CD4-positive, alpha-beta memory T cell (primary cell): ENCODE measurements at regions of chr18 and their contacts with region 1.

Region 1: GRCh38 chr18:11995445-11996189 is 14.3 kb downstream of the IMPA2 start:
- DNase-seq: peak; percentile 45 to 56 (median 50)
- H3K4me3 ChIP-seq: peak overlapping the region in 1 of 2 donors; percentile 26
- H3K4me3 Mint-ChIP-seq: peak overlapping the region in 7 of 8 donors; percentile 12 to 80 (median 65)
- H3K27ac ChIP-seq: peak overlapping the region; percentile 5
- H3K27ac Mint-ChIP-seq: peak overlapping the region in 5 of 7 donors; percentile 5 to 86 (median 70)
- H3K4me1 ChIP-seq: peaks cover 12% of the 10 kb centered on the region
- H3K4me1 Mint-ChIP-seq: peaks cover 8 to 16% (median 9%) of the 10 kb centered on the region in 4 donors
- H3K27me3 ChIP-seq: no peaks in the 10 kb centered on the region
- H3K27me3 Mint-ChIP-seq: no peaks in the 10 kb centered on the region

Region 2: DNA sequence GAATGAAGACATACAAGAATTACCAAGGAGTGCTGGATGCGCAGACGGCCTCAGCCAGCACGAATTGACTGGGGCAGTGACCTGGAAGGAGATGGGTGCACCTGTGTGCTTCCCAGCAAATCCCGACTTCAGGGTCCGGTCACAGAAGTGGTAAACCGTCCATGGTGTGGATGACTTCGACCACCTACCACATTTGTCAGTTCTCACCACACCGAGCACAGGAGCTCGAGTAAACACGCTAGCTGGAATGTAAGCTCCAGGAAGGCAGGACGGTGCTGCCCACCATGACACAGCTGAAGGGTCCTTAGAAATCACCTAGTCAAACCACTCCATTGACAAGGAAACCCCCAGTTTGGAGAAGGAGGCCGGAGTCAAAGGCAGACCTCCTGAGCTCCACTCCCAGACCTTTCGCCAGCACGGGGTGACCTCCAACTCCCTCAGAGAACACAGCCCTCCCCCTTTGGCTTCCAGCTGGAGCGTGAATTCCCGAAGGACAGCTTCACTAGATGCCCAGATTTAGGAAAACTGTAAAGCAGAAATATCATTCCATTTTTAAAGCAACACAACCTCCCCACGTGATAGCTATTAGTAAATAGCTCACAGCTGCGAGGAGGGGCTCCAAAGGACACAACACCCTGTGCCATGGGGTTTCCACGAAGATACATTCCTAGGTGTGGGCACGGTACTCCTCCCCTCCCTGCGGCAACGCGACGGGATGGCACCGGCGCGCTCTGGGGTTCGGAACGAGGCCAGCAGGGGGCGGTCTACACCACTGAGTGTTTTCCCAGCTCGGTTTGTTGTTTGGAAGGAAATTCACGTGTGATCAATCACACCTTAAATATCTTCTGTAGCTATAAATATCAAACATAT is 340.6 kb before region 1 on chr18:
- CTCF ChIA-PET with region 1: interaction called, 16 read pairs
- POLR2A ChIA-PET with region 1: no interaction called
- intact Hi-C with region 1: no loop called
- DNase-seq: peak in 3 of 5 donors; percentile 5 to 16 (median 13)
- H3K4me3 ChIP-seq: peak overlapping the region in 1 of 2 donors; percentile 8
- H3K4me3 Mint-ChIP-seq: no peak overlapping the region
- H3K27ac ChIP-seq: no peak overlapping the region
- H3K27ac Mint-ChIP-seq: no peak overlapping the region
- H3K4me1 ChIP-seq: no peaks in the 10 kb centered on the region
- H3K4me1 Mint-ChIP-seq: peaks cover 0 to 6% (median 3%) of the 10 kb centered on the region in 4 donors
- H3K27me3 ChIP-seq: no peaks in the 10 kb centered on the region
- H3K27me3 Mint-ChIP-seq: peaks cover 14 to 45% of the 10 kb centered on the region in 2 donors

Region 3: GRCh38 chr18:11733031-11733430 is 262.6 kb before region 1 on chr18:
- CTCF ChIA-PET with region 1: interaction called, 22 read pairs
- POLR2A ChIA-PET with region 1: no interaction called
- intact Hi-C with region 1: no loop called
- DNase-seq: peak; percentile 38 to 58 (median 44)
- H3K4me3 ChIP-seq: no peak overlapping the region
- H3K4me3 Mint-ChIP-seq: peak overlapping the region in 2 of 8 donors; percentile 22 to 27
- H3K27ac ChIP-seq: no peak overlapping the region
- H3K27ac Mint-ChIP-seq: no peak overlapping the region
- H3K4me1 ChIP-seq: no peaks in the 10 kb centered on the region
- H3K4me1 Mint-ChIP-seq: peaks cover 0 to 3% (median under 1%) of the 10 kb centered on the region in 4 donors
- H3K27me3 ChIP-seq: no peaks in the 10 kb centered on the region
- H3K27me3 Mint-ChIP-seq: peaks cover 18 to 26% of the 10 kb centered on the region in 2 donors

Region 4: DNA sequence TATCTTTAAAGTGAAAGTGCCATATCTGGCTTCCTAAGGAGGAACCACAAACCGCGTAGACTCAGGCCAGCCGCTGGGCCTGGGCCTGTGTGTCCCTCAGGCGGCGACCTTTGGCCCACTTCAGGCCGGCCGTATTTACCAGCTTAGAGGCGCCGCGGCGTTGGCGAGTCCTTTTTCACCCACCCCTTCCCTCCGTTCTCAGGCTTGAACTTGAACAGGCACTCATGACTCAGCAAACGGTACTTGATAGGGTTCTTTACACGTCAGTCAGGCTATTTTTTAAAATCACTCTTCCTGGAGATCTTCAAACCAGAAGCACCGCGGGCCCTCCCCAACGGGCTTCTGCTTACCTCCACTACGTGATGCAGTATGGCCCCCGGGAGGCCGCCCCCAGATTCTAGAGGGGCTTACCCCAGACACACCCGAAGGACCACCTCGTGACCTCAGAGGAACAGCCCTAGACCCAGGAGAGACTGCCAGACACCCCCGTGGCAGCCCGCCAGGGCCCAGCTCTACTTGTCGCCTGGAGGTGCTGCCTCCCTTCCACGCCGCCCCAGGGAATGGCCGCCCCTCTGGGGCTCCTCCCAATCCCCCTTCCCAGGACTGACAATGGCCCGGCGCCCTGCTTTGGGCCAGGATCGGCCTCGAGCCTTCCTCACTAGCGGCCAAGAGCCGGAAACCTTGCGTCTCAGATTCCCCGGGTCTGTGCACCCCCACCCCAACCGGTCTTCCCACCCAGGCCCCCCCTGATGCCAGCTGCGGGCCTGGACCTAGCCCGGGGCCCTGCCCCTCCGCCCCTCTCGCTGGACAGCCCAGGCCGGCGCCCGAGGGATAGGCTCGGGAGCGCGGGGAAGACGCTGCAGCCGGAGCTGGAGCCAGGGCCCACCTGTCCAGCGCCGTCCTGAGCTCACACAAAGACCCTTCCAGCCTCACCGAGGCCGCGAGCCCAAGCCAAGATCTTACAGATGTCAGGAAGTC is 48.1 kb before region 1 on chr18:
- CTCF ChIA-PET with region 1: interaction called, 665 read pairs
- POLR2A ChIA-PET with region 1: no interaction called
- intact Hi-C with region 1: no loop called
- DNase-seq: peak; percentile 40 to 73 (median 59)
- H3K4me3 ChIP-seq: peak overlapping the region in 1 of 2 donors; percentile 62
- H3K4me3 Mint-ChIP-seq: peak overlapping the region; percentile 83 to 95 (median 86)
- H3K27ac ChIP-seq: no peak overlapping the region
- H3K27ac Mint-ChIP-seq: peak overlapping the region; percentile 17 to 93 (median 88)
- H3K4me1 ChIP-seq: peaks cover 8% of the 10 kb centered on the region
- H3K4me1 Mint-ChIP-seq: peaks cover 6 to 18% (median 10%) of the 10 kb centered on the region in 4 donors
- H3K27me3 ChIP-seq: no peaks in the 10 kb centered on the region
- H3K27me3 Mint-ChIP-seq: no peaks in the 10 kb centered on the region

Region 5: GRCh38 chr18:11980555-11981382 is 14.8 kb before region 1 on chr18:
- CTCF ChIA-PET with region 1: interaction called, 23 read pairs
- POLR2A ChIA-PET with region 1: interaction called, 5 read pairs
- intact Hi-C with region 1: no loop called
- DNase-seq: peak; percentile 94 to 95 (median 94)
- H3K4me3 ChIP-seq: peak overlapping the region; percentile 29 to 69
- H3K4me3 Mint-ChIP-seq: peak overlapping the region; percentile 81 to 93 (median 86)
- H3K27ac ChIP-seq: peak overlapping the region; percentile 9
- H3K27ac Mint-ChIP-seq: peak overlapping the region; percentile 25 to 79 (median 71)
- H3K4me1 ChIP-seq: peaks cover 12% of the 10 kb centered on the region
- H3K4me1 Mint-ChIP-seq: peaks cover 10 to 15% (median 12%) of the 10 kb centered on the region in 4 donors
- H3K27me3 ChIP-seq: no peaks in the 10 kb centered on the region
- H3K27me3 Mint-ChIP-seq: no peaks in the 10 kb centered on the region

Region 6: GRCh38 chr18:12005538-12006487 is 10.2 kb after region 1 on chr18:
- CTCF ChIA-PET with region 1: interaction called, 4 read pairs
- POLR2A ChIA-PET with region 1: interaction called, 10 read pairs
- intact Hi-C with region 1: no loop called
- DNase-seq: no peak
- H3K4me3 ChIP-seq: no peak overlapping the region
- H3K4me3 Mint-ChIP-seq: no peak overlapping the region
- H3K27ac ChIP-seq: no peak overlapping the region
- H3K27ac Mint-ChIP-seq: no peak overlapping the region
- H3K4me1 ChIP-seq: no peaks in the 10 kb centered on the region
- H3K4me1 Mint-ChIP-seq: no peaks in the 10 kb centered on the region
- H3K27me3 ChIP-seq: no peaks in the 10 kb centered on the region
- H3K27me3 Mint-ChIP-seq: no peaks in the 10 kb centered on the region

Region 7: GRCh38 chr18:12702221-12703095 is 706.8 kb after region 1 on chr18 and contains the starts of genes CEP76 and PSMG2:
- CTCF ChIA-PET with region 1: no interaction called
- POLR2A ChIA-PET with region 1: no interaction called
- intact Hi-C with region 1: no loop called
- DNase-seq: peak; percentile 84 to 90 (median 87)
- H3K4me3 ChIP-seq: peak within 1 kb of the TSS; percentile 82 to 99
- H3K4me3 Mint-ChIP-seq: peak within 1 kb of the TSS; percentile 87 to 100 (median 98)
- H3K27ac ChIP-seq: peak within 1 kb of the TSS; percentile 93
- H3K27ac Mint-ChIP-seq: peak within 1 kb of the TSS; percentile 89 to 100 (median 96)
- H3K4me1 ChIP-seq: peaks cover 46% of the 10 kb centered on the region
- H3K4me1 Mint-ChIP-seq: peaks cover 32 to 60% (median 48%) of the 10 kb centered on the region in 4 donors
- H3K27me3 ChIP-seq: no peaks in the 10 kb centered on the region
- H3K27me3 Mint-ChIP-seq: no peaks in the 10 kb centered on the region
- total RNA-seq, gene CEP76: 9.9 to 13.1 TPM
- total RNA-seq, gene PSMG2: 59.7 to 62.0 TPM